ENCODE measurements at regions of chr15 and their contacts with region 1.

Region 1: DNA sequence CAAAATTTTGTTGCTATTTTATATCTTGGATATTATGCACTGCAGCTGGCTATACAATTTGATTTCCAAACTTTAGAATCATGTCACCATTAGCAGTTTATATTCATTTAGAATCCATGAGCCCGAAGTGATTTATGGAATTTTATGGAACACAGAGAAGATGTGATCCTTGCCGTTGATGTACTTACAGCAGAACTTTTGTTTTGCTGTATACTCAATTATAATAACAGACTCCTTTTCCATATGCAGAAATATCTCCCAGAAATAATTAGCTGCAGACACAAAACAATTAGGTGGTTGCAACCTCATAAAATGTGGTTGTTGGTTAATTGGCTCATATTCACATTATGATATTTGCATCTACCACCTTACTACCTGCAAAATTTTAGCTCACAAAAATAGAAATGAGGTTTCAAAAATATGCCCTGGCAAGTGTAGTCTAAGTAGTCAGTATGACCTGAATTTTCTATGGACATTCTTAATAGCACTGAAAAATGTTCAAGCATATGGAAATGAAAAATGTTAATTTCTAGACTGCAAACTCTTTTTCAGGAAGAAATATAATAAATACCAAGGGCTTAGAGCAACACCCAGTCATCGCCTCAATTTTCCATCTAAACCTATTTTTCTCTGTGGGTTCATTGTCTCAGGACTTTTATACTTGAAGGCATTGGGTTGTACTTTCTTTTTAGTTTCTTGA is 997.6 kb downstream of the MCTP2 start:
- DNase-seq: no peak
- H3K4me3 ChIP-seq: no peak overlapping the region
- H3K27ac ChIP-seq: no peak overlapping the region
- H3K4me1 ChIP-seq: no peaks in the 10 kb centered on the region
- H3K27me3 ChIP-seq: no peaks in the 10 kb centered on the region
- CTCF ChIP-seq: no peak
- POLR2A ChIP-seq: no peak

Region 2: GRCh38 chr15:95196176-95196801 is 32.7 kb before region 1 on chr15:
- intact Hi-C with region 1: loop called (anchors 2 kb)
- DNase-seq: no peak
- H3K4me3 ChIP-seq: no peak overlapping the region
- H3K27ac ChIP-seq: no peak overlapping the region
- H3K4me1 ChIP-seq: no peaks in the 10 kb centered on the region
- H3K27me3 ChIP-seq: no peaks in the 10 kb centered on the region
- CTCF ChIP-seq: no peak
- POLR2A ChIP-seq: no peak